Cardiac septum (tissue), 1 donor: ENCODE measurements at regions of chr12 and their contacts with region 1.

Region 1: GRCh38 chr12:109713187-109713984 is at the start of gene FAM222A:
- DNase-seq: peak; percentile 98
- total RNA-seq, gene FAM222A: 7.8 TPM

Region 2: DNA sequence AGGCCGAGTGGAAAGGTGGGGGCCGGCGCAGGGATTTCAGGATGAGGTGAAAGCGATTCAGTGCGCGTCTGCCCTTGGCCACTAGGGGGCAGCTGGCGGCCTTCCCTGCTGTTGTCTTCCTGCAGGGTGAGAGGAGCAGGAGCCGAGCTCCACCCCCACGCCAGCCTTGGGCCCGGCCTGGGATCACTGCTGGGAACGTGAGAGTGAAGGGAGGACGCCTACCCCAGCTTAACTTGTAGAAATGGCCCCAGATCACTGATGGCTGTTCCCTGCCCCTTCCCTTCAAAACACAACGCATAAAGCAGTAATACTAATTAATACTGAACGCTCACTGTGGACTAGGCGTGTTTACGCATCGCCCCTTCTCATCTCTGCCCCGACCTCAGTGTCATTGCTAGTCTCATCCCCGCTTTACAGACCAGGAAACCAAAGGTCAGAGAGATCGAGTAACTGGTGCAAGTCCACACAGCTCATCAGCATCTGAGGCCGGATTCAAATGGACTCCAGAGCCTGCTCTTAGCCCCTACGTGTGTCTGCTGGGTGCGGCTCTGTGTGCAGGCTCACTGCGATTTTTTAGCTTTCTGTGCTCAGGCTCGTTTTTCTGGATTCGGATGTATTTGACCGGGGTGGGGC is 115.5 kb before region 1 on chr12:
- intact Hi-C with region 1: loop called (anchors 5 kb)
- DNase-seq: peak; percentile 94

Region 3: DNA sequence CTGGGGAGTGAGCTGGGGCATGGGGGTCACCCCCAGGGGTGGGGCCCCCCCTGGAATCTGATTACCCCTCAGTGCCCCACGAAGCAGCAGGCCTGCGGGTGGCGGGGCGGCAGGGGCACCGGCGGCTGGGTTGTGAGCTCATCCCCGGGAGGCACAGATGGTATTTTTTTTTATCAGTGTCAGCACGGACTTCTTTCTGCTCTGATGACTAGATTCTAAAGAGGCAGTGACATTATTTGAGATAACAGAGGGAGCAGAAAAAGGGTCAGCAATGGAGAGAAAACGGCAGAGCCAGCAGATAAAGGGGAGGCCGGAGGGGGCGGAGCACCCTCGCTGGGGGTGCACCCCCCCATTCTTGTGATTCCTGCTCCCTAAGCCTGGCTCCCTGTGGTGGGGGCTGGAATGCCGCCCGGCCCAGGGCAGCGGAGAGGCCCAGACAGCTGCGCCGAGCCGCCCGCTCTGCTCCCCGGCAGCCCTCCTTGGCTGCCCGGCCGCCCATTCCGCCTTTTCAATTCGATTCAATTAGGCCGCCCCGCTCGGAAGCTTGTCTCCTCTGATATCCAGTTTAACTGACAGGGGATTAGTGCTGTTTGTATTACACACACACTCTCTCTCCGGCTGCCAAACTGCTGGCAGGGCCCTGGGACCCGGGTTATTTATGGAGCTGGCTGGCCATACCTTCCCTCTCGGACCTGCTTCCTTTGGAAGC is 106.9 kb before region 1 on chr12:
- intact Hi-C with region 1: loop called (anchors 1 kb)
- DNase-seq: no peak

Region 4: GRCh38 chr12:109775172-109775881 is 61.9 kb after region 1 on chr12:
- intact Hi-C with region 1: loop called (anchors 2 kb)
- DNase-seq: peak; percentile 87

Region 5: GRCh38 chr12:109789526-109790048 is 76.2 kb after region 1 on chr12:
- intact Hi-C with region 1: no loop called
- DNase-seq: no peak